Caco-2 (cell line): ENCODE measurements at regions of chr12 and their contacts with region 1.

Region 1: DNA sequence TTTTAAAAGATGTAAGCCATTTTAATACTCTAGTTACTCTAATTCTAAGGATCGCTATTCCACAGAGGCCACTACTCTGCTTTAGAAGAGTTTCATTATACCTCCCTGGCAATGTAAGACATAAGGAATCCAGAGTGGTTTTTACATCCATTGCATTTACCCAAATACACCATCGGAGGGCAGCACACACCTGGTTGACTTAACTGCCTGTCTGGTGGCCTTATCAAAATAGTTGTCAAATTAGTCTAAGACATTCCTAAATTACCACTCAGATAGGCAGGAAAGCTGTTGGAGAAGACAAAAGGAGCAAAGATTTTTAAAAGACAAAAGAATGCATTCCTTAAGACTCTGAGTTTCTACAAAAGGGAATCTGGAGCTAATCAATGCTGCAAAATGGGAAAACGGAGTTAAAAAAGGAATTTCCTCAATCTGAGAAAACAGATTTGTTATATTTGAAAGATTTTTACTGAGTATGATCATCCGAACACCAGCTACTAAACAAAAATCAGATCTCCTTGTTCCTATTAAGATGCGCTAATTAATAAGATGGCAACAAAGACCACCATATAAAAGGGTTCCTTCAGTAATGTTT is 33.8 kb upstream of the FGD4 start:
- DNase-seq: peak; percentile 75 to 79
- H3K4me3 ChIP-seq: no peak overlapping the region
- H3K4me3 Mint-ChIP-seq: no peak overlapping the region
- H3K27ac Mint-ChIP-seq: no peak overlapping the region
- H3K4me1 ChIP-seq: peaks cover 13% of the 10 kb centered on the region
- H3K4me1 Mint-ChIP-seq: peaks cover 15% of the 10 kb centered on the region
- H3K27me3 ChIP-seq: no peaks in the 10 kb centered on the region
- H3K27me3 Mint-ChIP-seq: no peaks in the 10 kb centered on the region
- CTCF ChIP-seq: peak; percentile 82 to 98

Region 2: DNA sequence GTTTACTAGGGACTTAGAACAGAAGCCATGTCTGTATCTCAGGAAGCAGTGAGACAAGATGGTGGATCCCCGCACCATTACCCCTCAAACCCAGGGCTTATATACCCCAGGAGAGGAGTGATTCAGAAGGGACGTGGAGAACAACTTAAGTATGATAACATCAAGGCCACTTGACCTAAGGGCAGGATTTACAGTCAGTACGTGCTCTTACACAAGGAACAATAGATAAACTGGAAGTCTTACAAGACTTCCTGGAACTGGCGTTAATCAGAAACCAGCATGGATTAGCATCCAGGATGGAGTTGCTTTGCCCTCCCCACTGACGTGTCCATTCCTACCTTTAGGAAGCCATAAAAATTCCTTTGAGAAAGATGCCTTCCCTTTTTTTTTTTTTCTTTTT is 714.6 kb before region 1 on chr12:
- CTCF ChIA-PET with region 1: no interaction called
- POLR2A ChIA-PET with region 1: no interaction called
- intact Hi-C with region 1: loop called (anchors 5 kb)
- DNase-seq: peak; percentile 82 to 90
- H3K4me3 ChIP-seq: no peak overlapping the region
- H3K4me3 Mint-ChIP-seq: peak overlapping the region; percentile 38
- H3K27ac Mint-ChIP-seq: peak overlapping the region; percentile 95
- H3K4me1 ChIP-seq: peaks cover 30% of the 10 kb centered on the region
- H3K4me1 Mint-ChIP-seq: peaks cover 25% of the 10 kb centered on the region
- H3K27me3 ChIP-seq: no peaks in the 10 kb centered on the region
- H3K27me3 Mint-ChIP-seq: no peaks in the 10 kb centered on the region
- CTCF ChIP-seq: no peak

Region 3: DNA sequence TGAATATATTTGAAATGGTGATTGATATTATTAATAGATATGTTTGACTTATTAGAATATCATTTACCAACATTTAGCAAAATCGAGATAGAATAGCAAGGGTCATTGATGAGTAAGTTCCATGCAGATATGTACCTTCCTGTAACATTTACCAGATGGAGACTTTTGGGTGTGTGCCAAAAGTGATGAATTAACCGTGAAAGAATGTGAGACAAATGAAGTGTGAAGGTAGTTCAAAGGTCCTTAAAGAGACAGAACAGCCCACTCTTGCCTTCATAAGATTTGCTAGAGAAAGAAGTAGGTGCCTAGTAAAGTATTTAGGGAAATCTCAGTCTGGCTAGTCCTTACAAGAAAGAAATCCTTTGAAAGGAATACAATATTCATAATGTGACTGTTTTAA is 79.3 kb after region 1 on chr12:
- CTCF ChIA-PET with region 1: no interaction called
- POLR2A ChIA-PET with region 1: no interaction called
- intact Hi-C with region 1: loop called (anchors 2 kb)
- DNase-seq: peak; percentile 66 to 68
- H3K4me3 ChIP-seq: no peak overlapping the region
- H3K4me3 Mint-ChIP-seq: peak overlapping the region; percentile 57
- H3K27ac Mint-ChIP-seq: peak overlapping the region; percentile 94
- H3K4me1 ChIP-seq: peaks cover 59% of the 10 kb centered on the region
- H3K4me1 Mint-ChIP-seq: peaks cover 68% of the 10 kb centered on the region
- H3K27me3 ChIP-seq: no peaks in the 10 kb centered on the region
- H3K27me3 Mint-ChIP-seq: no peaks in the 10 kb centered on the region
- CTCF ChIP-seq: no peak

Region 4: DNA sequence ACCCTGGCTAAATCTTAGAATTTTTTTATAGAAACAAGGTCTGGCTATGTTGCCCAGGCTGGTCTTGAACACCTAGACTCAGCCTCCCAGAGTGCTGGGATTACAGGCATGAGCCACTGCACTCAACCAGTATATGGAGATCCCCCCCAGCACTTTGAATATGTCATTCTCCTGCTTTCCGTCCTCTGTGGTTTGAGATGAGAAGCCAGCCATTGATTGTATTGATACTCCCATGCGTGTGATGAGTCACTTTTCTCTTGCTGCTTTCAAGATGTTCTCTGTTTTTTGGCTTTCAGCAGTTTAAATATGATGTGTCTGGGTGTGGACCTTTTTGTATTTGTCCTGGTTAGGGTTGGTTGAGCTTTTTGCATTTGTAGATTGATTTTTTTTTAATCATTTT is 238.3 kb after region 1 on chr12:
- CTCF ChIA-PET with region 1: no interaction called
- POLR2A ChIA-PET with region 1: no interaction called
- intact Hi-C with region 1: loop called (anchors 1 kb)
- DNase-seq: no peak
- H3K4me3 ChIP-seq: no peak overlapping the region
- H3K4me3 Mint-ChIP-seq: no peak overlapping the region
- H3K27ac Mint-ChIP-seq: peak overlapping the region; percentile 64
- H3K4me1 ChIP-seq: peaks cover 29% of the 10 kb centered on the region
- H3K4me1 Mint-ChIP-seq: peaks cover 29% of the 10 kb centered on the region
- H3K27me3 ChIP-seq: no peaks in the 10 kb centered on the region
- H3K27me3 Mint-ChIP-seq: no peaks in the 10 kb centered on the region
- CTCF ChIP-seq: no peak

Region 5: GRCh38 chr12:32671930-32672780 is 306.6 kb after region 1 on chr12:
- CTCF ChIA-PET with region 1: interaction called, 4 read pairs
- POLR2A ChIA-PET with region 1: no interaction called
- intact Hi-C with region 1: loop called (anchors 1 kb)
- DNase-seq: peak; percentile 57 to 74
- H3K4me3 ChIP-seq: no peak overlapping the region
- H3K4me3 Mint-ChIP-seq: no peak overlapping the region
- H3K27ac Mint-ChIP-seq: no peak overlapping the region
- H3K4me1 ChIP-seq: no peaks in the 10 kb centered on the region; the same call in 1 of the 2 replicates
- H3K4me1 Mint-ChIP-seq: no peaks in the 10 kb centered on the region
- H3K27me3 ChIP-seq: no peaks in the 10 kb centered on the region
- H3K27me3 Mint-ChIP-seq: no peaks in the 10 kb centered on the region
- CTCF ChIP-seq: peak; percentile 73 to 80